Panc1 (cell line): ENCODE measurements at regions of chr22 and their contacts with region 1.

Region 1: DNA sequence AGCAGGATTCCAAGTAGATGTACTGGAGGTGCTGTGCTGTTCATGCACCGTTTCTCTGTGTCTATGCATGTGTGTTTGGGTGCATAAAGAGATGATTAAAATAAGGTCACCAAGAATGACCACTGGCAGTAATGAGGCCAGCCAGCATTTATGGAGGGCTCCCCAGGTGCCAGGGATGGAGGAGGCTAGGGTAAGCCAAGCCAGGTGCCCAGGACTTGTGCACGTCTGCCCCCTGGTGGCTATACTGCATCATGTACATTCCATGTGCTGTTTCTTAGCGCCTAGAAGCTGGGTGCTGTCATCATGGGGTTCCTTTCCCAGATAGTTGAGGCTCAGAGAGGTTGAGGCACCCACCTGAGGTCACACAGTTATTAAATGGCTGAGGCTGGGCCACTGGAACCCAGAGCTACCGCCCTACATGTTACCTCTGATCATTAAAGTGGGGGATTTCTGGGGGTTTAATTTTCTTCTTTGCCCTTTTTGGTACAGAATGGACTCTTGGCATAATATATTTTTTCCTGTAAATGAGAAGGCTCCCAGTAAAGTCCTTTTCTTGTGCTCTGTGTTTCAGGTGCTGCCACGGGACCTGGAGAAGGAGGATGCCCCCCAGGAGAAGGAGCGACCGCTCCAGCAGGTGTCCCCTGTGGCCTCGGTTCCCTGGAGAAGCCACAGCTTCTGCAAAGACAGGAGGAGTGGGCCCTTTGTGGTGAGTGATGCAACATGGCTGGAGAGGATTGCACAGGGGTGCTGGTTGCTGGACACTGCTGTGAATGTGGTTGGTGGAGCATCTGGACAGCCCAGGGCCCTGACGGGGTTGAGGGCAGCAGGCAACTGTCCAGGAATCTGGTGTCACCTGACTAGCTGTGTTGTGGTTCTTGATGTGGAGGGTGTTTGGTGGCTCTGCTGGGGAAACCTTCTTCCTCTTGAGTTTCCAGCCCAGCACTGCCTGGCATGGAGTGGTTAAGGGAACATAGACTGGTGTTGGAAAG is 96.4 kb downstream of the KIAA1671 start:
- DNase-seq: peak; percentile 33
- ATAC-seq: peak; percentile 92
- H3K4me3 ChIP-seq: no peak overlapping the region
- H3K27ac ChIP-seq: no peak overlapping the region; the same call in 1 of the 2 replicates
- H3K4me1 ChIP-seq: peaks cover 6% of the 10 kb centered on the region; the same call in 1 of the 2 replicates
- H3K27me3 ChIP-seq: no peaks in the 10 kb centered on the region
- CTCF ChIP-seq: peak; percentile 87

Region 2: DNA sequence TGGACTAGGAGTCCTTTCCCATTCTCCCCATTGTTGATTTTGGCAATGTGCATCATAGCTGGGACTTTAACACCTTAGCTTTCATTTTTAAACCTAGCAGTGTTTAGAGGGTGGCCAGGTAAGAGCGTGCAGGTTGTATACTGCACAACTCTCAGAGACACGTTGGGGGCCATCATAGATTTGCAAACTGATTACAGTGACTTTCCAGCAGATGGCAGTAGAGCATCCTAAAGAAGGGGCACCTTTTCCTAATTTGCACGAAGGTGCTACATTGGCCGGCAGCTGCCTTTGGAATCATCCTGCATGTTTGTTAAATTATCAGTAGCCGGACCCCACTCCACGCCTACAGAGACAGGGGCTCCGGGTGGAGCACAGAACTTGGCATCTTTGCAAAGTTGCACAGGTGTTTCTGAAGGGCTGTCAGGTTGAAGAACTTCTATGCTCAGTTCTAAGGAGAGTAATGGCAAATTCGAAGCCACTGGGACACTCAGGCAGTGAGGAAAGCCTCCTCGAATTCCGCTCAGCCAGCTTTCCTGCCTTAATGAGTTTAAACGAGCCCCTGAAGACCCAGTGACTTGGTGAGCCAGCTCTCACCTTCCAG is 110.1 kb before region 1 on chr22:
- CTCF ChIA-PET with region 1: interaction called, 3 read pairs
- POLR2A ChIA-PET with region 1: interaction called, 8 read pairs
- in situ Hi-C with region 1: no loop called
- intact Hi-C with region 1: loop called (anchors 5 kb)
- DNase-seq: no peak
- ATAC-seq: peak; percentile 65
- H3K4me3 ChIP-seq: no peak overlapping the region
- H3K27ac ChIP-seq: no peak overlapping the region
- H3K4me1 ChIP-seq: peaks cover 6% of the 10 kb centered on the region; the same call in 1 of the 2 replicates
- H3K27me3 ChIP-seq: no peaks in the 10 kb centered on the region
- CTCF ChIP-seq: peak; percentile 81

Region 3: GRCh38 chr22:24951942-24952836 is 96.8 kb before region 1 on chr22 and contains the start of gene KIAA1671:
- CTCF ChIA-PET with region 1: no interaction called
- POLR2A ChIA-PET with region 1: no interaction called
- in situ Hi-C with region 1: no loop called
- intact Hi-C with region 1: loop called (anchors 2 kb)
- DNase-seq: no peak
- ATAC-seq: peak; percentile 95
- H3K4me3 ChIP-seq: peak within 1 kb of the TSS; percentile 84 to 86
- H3K27ac ChIP-seq: peak within 1 kb of the TSS; percentile 92
- H3K4me1 ChIP-seq: peaks cover 8% of the 10 kb centered on the region
- H3K27me3 ChIP-seq: no peaks in the 10 kb centered on the region
- CTCF ChIP-seq: peak; percentile 96
- total RNA-seq, gene KIAA1671: 48.1 TPM

Region 4: GRCh38 chr22:24969560-24970301 is 79.2 kb before region 1 on chr22:
- CTCF ChIA-PET with region 1: interaction called, 7 read pairs
- POLR2A ChIA-PET with region 1: interaction called, 12 read pairs
- in situ Hi-C with region 1: no loop called
- intact Hi-C with region 1: no loop called
- DNase-seq: no peak
- ATAC-seq: peak; percentile 86
- H3K4me3 ChIP-seq: peak overlapping the region in 1 of 2 experiments; percentile 23; a peak in 2 of 4 replicates
- H3K27ac ChIP-seq: peak overlapping the region; percentile 86
- H3K4me1 ChIP-seq: peaks cover 63% of the 10 kb centered on the region
- H3K27me3 ChIP-seq: no peaks in the 10 kb centered on the region
- CTCF ChIP-seq: no peak